Activated CD4-positive, alpha-beta memory T cell treated with anti-CD3 and anti-CD28 coated beads for 36 hours (primary cell): ENCODE measurements at regions of chr16 and their contacts with region 1.

Region 1: GRCh38 chr16:58098207-58099096 is 30.7 kb downstream of the CFAP20 start:
- DNase-seq: no peak
- H3K4me3 Mint-ChIP-seq: no peak overlapping the region
- H3K27ac Mint-ChIP-seq: no peak overlapping the region
- H3K4me1 Mint-ChIP-seq: no peaks in the 10 kb centered on the region
- H3K27me3 Mint-ChIP-seq: peaks cover 2% of the 10 kb centered on the region

Region 2: GRCh38 chr16:58063377-58064076 is 34.9 kb before region 1 on chr16:
- CTCF ChIA-PET with region 1: no interaction called
- POLR2A ChIA-PET with region 1: no interaction called
- intact Hi-C with region 1: no loop called
- DNase-seq: no peak
- H3K4me3 Mint-ChIP-seq: no peak overlapping the region
- H3K27ac Mint-ChIP-seq: no peak overlapping the region
- H3K4me1 Mint-ChIP-seq: no peaks in the 10 kb centered on the region
- H3K27me3 Mint-ChIP-seq: no peaks in the 10 kb centered on the region

Region 3: GRCh38 chr16:58110571-58111301 is 12.3 kb after region 1 on chr16:
- CTCF ChIA-PET with region 1: interaction called, 12 read pairs
- POLR2A ChIA-PET with region 1: no interaction called
- intact Hi-C with region 1: no loop called
- DNase-seq: no peak
- H3K4me3 Mint-ChIP-seq: no peak overlapping the region
- H3K27ac Mint-ChIP-seq: no peak overlapping the region
- H3K4me1 Mint-ChIP-seq: no peaks in the 10 kb centered on the region
- H3K27me3 Mint-ChIP-seq: no peaks in the 10 kb centered on the region

Region 4: GRCh38 chr16:58121132-58121531 is 22.7 kb after region 1 on chr16:
- CTCF ChIA-PET with region 1: interaction called, 10 read pairs
- POLR2A ChIA-PET with region 1: no interaction called
- intact Hi-C with region 1: loop called (anchors 2 kb)
- DNase-seq: no peak
- H3K4me3 Mint-ChIP-seq: no peak overlapping the region
- H3K27ac Mint-ChIP-seq: no peak overlapping the region
- H3K4me1 Mint-ChIP-seq: peaks cover 47% of the 10 kb centered on the region
- H3K27me3 Mint-ChIP-seq: no peaks in the 10 kb centered on the region